ENCODE measurements at regions of chr9 and their contacts with region 1.

Region 1: DNA sequence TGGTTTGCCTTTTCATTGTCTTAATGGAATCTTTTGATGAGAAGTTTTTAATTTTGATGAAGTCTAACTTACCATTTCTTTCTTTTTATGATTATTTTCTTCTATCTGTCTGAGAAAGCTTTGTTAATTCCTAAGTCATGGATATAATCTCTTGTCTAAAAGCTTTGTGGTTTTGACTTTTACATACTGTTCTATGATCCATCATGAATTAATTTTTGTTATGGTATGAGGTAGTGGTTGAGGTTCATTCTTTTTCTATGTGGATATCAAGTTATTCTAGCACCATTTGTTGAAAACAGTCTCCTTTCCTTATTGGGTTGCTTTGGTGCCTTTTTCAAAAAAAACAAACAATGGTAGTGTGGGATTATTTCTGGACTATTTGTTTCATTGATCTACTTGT is 20.4 kb downstream of the FBXO10 start:
- DNase-seq: no peak
- ATAC-seq: no peak
- H3K4me3 ChIP-seq: no peak overlapping the region
- H3K27ac ChIP-seq: no peak overlapping the region
- H3K4me1 ChIP-seq: peaks cover 9% of the 10 kb centered on the region
- H3K27me3 ChIP-seq: no peaks in the 10 kb centered on the region
- CTCF ChIP-seq: no peak

Region 2: GRCh38 chr9:37538099-37538498 is 17.7 kb before region 1 on chr9:
- CTCF ChIA-PET with region 1: no interaction called
- POLR2A ChIA-PET with region 1: interaction called, 16 read pairs
- in situ Hi-C with region 1: no loop called
- intact Hi-C with region 1: no loop called
- DNase-seq: no peak
- ATAC-seq: no peak
- H3K4me3 ChIP-seq: no peak overlapping the region
- H3K27ac ChIP-seq: no peak overlapping the region
- H3K4me1 ChIP-seq: no peaks in the 10 kb centered on the region
- H3K27me3 ChIP-seq: no peaks in the 10 kb centered on the region
- CTCF ChIP-seq: no peak

Measured in Panc1 (cell line).